SK-N-SH (cell line): ENCODE measurements at regions of chr4 and their contacts with region 1.

Region 1: GRCh38 chr4:168923526-168924194 is 86.4 kb downstream of the CBR4 start:
- DNase-seq: peak; percentile 60
- H3K4me3 ChIP-seq: no peak overlapping the region
- H3K27ac ChIP-seq: peak overlapping the region; percentile 9 to 94; a peak in 3 of 4 replicates
- H3K4me1 ChIP-seq: peaks cover 0 to 35% of the 10 kb centered on the region in 2 experiments; a peak in 2 of 4 replicates
- H3K27me3 ChIP-seq: no peaks in the 10 kb centered on the region
- CTCF ChIP-seq: peak; percentile 85
- EP300 ChIP-seq: peak in 1 of 2 experiments; percentile 78; a peak in 2 of 4 replicates
- RAD21 ChIP-seq: peak; percentile 84

Region 2: GRCh38 chr4:168514249-168514852 is 409.3 kb before region 1 on chr4:
- CTCF ChIA-PET with region 1: interaction called, 48 read pairs
- POLR2A ChIA-PET with region 1: no interaction called
- DNase-seq: peak; percentile 22
- H3K4me3 ChIP-seq: no peak overlapping the region
- H3K27ac ChIP-seq: no peak overlapping the region
- H3K4me1 ChIP-seq: peaks cover 0 to 4% of the 10 kb centered on the region in 2 experiments; a peak in 3 of 4 replicates
- H3K27me3 ChIP-seq: no peaks in the 10 kb centered on the region
- CTCF ChIP-seq: peak; percentile 68
- EP300 ChIP-seq: no peak
- RAD21 ChIP-seq: peak; percentile 57

Region 3: GRCh38 chr4:168710353-168710946 is 213.2 kb before region 1 on chr4:
- CTCF ChIA-PET with region 1: interaction called, 52 read pairs
- POLR2A ChIA-PET with region 1: no interaction called
- DNase-seq: peak; percentile 22
- H3K4me3 ChIP-seq: no peak overlapping the region
- H3K27ac ChIP-seq: peak overlapping the region in 1 of 2 experiments; percentile 64; a peak in 1 of 4 replicates
- H3K4me1 ChIP-seq: peaks cover 0 to 20% of the 10 kb centered on the region in 2 experiments; a peak in 2 of 4 replicates
- H3K27me3 ChIP-seq: no peaks in the 10 kb centered on the region
- CTCF ChIP-seq: peak; percentile 68
- EP300 ChIP-seq: no peak
- RAD21 ChIP-seq: peak; percentile 73

Region 4: DNA sequence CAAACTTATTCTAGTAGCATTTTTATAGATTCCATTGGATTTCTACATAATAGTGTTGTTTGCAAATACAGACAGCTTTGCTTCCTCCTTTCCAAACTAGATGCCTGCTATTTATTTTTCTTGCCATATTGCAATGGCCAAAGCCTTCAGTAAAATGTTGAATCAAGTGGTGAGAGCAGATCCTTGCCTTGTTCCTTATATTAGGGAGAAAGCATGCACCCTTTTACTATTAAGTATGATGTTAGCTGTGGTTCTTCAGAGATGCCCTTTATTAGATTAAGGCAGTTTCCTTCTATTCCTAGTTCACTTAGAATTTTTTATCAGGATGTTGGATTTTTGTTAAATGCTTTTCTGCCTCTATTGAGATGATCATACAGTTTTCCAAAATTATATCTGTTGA is 147.3 kb before region 1 on chr4:
- CTCF ChIA-PET with region 1: no interaction called
- POLR2A ChIA-PET with region 1: no interaction called
- DNase-seq: no peak
- H3K4me3 ChIP-seq: no peak overlapping the region
- H3K27ac ChIP-seq: no peak overlapping the region
- H3K4me1 ChIP-seq: no peaks in the 10 kb centered on the region; a peak in 1 of 4 replicates
- H3K27me3 ChIP-seq: no peaks in the 10 kb centered on the region
- CTCF ChIP-seq: no peak
- EP300 ChIP-seq: no peak
- RAD21 ChIP-seq: no peak

Region 5: GRCh38 chr4:168995537-168996295 is 72.1 kb after region 1 on chr4:
- CTCF ChIA-PET with region 1: interaction called, 50 read pairs
- POLR2A ChIA-PET with region 1: no interaction called
- DNase-seq: no peak
- H3K4me3 ChIP-seq: no peak overlapping the region
- H3K27ac ChIP-seq: no peak overlapping the region
- H3K4me1 ChIP-seq: peaks cover 6 to 7% of the 10 kb centered on the region in 2 experiments; a peak in 3 of 4 replicates
- H3K27me3 ChIP-seq: no peaks in the 10 kb centered on the region
- CTCF ChIP-seq: peak; percentile 30
- EP300 ChIP-seq: no peak
- RAD21 ChIP-seq: peak; percentile 62

Region 6: DNA sequence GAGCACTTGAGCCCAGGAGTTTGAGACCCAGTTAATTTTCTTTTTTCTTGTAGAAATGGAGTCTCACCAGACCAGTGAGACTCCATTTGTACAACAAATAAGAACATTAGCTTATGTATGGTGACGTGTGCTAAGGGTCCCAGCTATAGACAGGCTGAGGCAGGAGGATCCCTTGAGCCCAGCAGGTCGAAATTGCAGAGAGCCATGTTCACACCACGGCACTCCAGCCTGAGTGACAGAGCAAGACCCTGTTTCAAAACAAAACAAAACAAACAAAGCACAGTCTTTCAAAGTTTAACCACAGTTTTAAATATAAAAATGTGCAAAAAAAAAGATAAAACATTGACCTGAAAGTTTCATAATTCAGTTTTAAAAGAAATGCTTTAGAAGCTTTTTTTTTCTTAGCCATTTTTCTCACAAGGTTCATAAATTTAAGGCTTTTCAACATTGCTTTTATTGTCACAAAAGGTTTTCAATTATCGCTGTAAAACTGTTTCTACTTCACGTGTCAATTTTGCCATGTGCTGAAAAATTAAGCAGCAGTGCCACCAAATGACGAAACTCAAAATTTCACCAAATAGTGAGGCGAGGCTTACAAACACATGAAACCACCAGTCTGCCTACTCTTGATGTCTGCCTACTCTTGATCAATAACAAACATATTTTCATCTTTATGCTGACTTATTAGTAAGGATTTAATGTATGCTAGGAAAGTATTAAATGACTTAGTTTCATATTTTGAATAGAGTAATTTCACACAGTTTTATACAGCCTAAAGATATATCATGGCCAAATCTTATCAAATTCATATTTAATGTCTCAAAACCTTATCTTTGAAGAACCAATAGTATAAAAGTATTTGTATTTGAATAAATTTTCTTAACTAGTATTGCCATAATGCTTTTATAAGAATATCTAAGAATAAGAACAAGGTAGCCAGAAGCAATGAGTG is 562.4 kb after region 1 on chr4:
- CTCF ChIA-PET with region 1: interaction called, 20 read pairs
- POLR2A ChIA-PET with region 1: no interaction called
- DNase-seq: peak; percentile 43
- H3K4me3 ChIP-seq: no peak overlapping the region
- H3K27ac ChIP-seq: peak overlapping the region in 1 of 2 experiments; percentile 39; a peak in 1 of 4 replicates
- H3K4me1 ChIP-seq: 0 out of 4 replicates have a peak, but pooled peaks cover 0 to 3% of the 10 kb centered on the region in 2 experiments
- H3K27me3 ChIP-seq: no peaks in the 10 kb centered on the region
- CTCF ChIP-seq: peak; percentile 76
- EP300 ChIP-seq: no peak
- RAD21 ChIP-seq: peak; percentile 95

Region 7: DNA sequence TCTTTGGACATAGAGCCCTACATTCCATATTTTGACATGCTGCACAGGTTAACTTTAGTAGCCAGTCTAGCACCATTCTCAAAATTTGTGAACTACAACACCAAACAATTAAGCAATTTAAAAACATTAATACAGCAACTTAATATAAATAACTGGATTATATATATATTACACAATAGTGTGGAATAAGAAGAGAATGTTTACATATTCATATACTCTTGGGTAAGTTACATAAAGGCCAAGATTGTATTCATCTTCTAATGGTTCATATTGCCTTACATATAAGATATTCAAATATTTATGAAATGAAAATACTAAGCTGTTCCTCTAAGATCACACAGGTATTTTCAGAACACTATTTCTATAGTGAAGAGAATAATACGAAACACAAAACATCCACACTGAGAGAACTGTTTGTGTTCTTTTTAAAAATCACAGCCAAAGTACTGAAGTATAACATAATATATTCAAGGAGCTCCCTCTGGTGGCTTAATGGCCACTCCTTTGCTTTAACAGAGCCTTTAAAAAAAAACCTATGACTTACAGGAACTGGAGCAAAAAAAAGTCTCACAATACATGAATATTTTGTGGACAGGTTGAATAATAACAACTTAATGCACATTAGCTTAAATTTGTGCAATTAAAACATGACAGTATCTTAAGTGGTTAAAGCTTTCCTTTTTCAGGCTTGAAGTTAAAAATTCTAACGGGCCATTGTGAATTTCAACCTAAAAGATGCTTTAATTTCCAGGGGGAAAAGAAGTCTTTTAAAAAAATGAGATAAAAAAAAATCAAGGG is 642.6 kb after region 1 on chr4:
- CTCF ChIA-PET with region 1: interaction called, 20 read pairs
- POLR2A ChIA-PET with region 1: no interaction called
- DNase-seq: peak; percentile 61
- H3K4me3 ChIP-seq: no peak overlapping the region; a peak in 1 of 4 replicates
- H3K27ac ChIP-seq: no peak overlapping the region
- H3K4me1 ChIP-seq: no peaks in the 10 kb centered on the region; a peak in 1 of 4 replicates
- H3K27me3 ChIP-seq: no peaks in the 10 kb centered on the region
- CTCF ChIP-seq: peak; percentile 88
- EP300 ChIP-seq: no peak
- RAD21 ChIP-seq: peak; percentile 75